ENCODE measurements at regions of chr6 and their contacts with region 1.

Region 1: DNA sequence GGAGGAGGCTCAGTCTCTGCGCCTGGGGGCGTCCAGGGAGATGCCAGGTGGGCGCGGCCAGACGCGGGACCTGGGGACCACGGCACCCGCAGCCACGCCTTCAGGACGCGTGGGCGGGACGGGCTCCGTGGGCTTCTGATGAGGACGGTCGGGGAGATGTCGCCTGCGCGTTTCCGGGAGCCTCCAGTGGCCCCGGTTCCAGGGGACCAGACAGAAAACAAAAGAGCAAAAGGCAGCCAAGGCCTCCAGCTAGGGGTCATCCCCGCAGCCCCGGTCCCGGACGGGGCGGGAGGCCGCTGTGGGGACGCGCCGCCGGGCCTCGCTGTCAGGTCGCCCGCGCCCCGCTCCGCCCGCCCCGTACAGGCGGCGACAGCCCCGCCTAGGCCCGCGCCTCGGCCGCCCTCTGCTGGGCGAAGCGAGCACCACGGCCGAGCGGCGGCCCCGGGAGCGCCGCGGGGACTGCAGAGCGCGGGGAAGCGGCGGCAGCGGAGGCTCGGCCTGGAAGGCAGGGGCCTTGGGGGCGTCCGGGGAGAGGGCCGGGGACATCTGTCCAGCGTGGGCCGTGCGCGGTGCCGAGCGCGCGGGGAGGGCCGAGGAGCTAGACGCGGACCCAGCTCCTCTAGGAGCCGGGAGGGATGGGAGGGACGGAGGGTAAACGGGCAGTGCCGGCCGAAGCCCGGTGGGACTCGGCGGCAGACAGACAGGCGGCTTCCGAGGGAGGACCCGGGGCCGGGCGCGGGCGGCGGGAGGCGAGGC is 48.7 kb downstream of the TMEM242 start:
- DNase-seq: peak; percentile 78
- H3K4me3 Mint-ChIP-seq: peak overlapping the region; percentile 86
- H3K27ac Mint-ChIP-seq: peak overlapping the region; percentile 67
- H3K4me1 Mint-ChIP-seq: peaks cover 4% of the 10 kb centered on the region
- H3K27me3 Mint-ChIP-seq: peaks cover 10% of the 10 kb centered on the region

Region 2: DNA sequence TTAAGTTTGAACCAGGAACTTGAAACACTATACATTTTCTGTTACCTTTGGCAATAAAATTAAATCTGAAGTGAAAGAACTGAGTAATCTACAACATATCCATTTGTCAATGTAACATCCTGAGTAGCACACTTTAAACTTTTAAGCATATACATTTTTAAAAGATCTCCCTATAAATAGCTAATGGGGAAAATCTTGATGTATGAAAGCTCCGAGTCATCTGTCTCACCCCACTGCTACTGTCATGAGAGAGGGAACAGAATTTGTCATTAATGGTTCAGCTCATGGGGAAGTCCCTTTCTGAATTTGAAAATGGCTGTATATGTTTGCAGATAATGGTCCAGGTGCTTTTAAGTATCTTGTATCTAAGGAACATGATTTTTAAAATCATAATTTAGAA is 1763.8 kb before region 1 on chr6:
- intact Hi-C with region 1: no loop called
- DNase-seq: no peak
- H3K4me3 Mint-ChIP-seq: no peak overlapping the region
- H3K27ac Mint-ChIP-seq: no peak overlapping the region
- H3K4me1 Mint-ChIP-seq: no peaks in the 10 kb centered on the region
- H3K27me3 Mint-ChIP-seq: peaks cover 3% of the 10 kb centered on the region

Region 3: GRCh38 chr6:156564127-156564806 is 710.4 kb before region 1 on chr6:
- intact Hi-C with region 1: loop called (anchors 1 kb)
- DNase-seq: peak; percentile 65
- H3K4me3 Mint-ChIP-seq: no peak overlapping the region
- H3K27ac Mint-ChIP-seq: no peak overlapping the region
- H3K4me1 Mint-ChIP-seq: peaks cover 7% of the 10 kb centered on the region
- H3K27me3 Mint-ChIP-seq: peaks cover 3% of the 10 kb centered on the region

Region 4: GRCh38 chr6:157034436-157035230 is 240.0 kb before region 1 on chr6:
- intact Hi-C with region 1: loop called (anchors 1 kb)
- DNase-seq: no peak
- H3K4me3 Mint-ChIP-seq: peak overlapping the region; percentile 65
- H3K27ac Mint-ChIP-seq: peak overlapping the region; percentile 40
- H3K4me1 Mint-ChIP-seq: peaks cover 25% of the 10 kb centered on the region
- H3K27me3 Mint-ChIP-seq: no peaks in the 10 kb centered on the region

Region 5: DNA sequence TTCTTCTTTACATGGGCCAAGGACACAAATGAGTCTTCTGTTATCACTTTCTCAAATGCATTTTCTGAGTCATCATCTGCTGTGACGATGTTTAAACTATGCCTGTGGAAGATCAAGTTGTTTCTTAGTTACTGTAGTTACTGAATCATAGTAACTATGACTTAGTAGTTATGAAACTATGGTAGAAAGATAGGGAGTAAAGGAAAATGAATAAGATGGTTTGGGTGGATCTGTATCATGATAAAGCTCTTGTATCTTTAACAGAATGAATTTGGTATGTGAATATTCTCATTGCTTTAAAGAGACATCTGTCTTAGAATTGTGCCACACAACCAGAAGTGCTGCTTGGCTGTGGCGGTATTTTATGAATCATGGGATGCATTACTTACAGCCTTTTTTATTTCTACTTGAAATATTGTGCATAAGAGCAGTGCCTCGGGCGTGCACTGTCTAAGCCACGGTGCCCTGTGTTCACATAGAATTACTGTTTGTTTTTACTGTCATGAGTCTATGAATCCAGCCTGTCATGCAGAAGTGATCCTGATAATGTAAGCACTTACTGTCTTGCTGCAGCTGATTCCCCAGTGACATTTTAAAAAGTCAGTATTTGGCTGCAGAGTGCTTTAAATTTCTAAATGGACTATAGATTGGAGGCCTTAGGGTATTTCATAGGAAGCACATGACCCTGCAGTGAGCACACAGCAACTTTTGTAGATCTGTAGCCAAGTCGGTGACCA is 166.6 kb before region 1 on chr6:
- intact Hi-C with region 1: loop called (anchors 5 kb)
- DNase-seq: no peak
- H3K4me3 Mint-ChIP-seq: no peak overlapping the region
- H3K27ac Mint-ChIP-seq: peak overlapping the region; percentile 73
- H3K4me1 Mint-ChIP-seq: peaks cover 55% of the 10 kb centered on the region
- H3K27me3 Mint-ChIP-seq: no peaks in the 10 kb centered on the region

Region 6: GRCh38 chr6:157221007-157221816 is 53.4 kb before region 1 on chr6:
- intact Hi-C with region 1: loop called (anchors 1 kb)
- DNase-seq: peak; percentile 80
- H3K4me3 Mint-ChIP-seq: peak overlapping the region; percentile 79
- H3K27ac Mint-ChIP-seq: peak overlapping the region; percentile 82
- H3K4me1 Mint-ChIP-seq: peaks cover 33% of the 10 kb centered on the region
- H3K27me3 Mint-ChIP-seq: peaks cover 4% of the 10 kb centered on the region

Region 7: DNA sequence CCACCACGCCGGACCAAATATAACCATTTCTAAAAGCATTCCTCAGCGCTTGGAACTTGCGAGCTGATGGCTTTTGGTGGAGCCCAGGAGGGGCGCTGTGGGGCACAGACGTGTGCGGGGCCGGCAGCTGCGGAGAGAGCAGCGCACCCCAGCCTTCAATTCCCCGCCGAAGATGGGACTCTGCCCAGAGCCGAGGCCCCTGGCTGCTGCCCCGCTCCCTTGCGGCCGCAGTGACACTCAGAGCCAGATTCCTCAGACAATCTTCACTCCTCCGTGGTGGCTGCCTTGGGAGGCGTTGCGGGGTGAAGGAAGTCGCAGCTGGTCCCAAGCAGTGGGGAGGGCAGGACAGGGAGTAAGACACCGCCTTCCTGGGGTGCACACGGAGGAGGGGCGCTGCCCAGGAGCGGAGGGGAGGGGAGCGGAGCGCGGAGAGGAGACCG is 39.0 kb before region 1 on chr6:
- intact Hi-C with region 1: loop called (anchors 1 kb)
- DNase-seq: peak; percentile 33
- H3K4me3 Mint-ChIP-seq: peak overlapping the region; percentile 87
- H3K27ac Mint-ChIP-seq: no peak overlapping the region
- H3K4me1 Mint-ChIP-seq: peaks cover 15% of the 10 kb centered on the region
- H3K27me3 Mint-ChIP-seq: peaks cover 44% of the 10 kb centered on the region

Region 8: DNA sequence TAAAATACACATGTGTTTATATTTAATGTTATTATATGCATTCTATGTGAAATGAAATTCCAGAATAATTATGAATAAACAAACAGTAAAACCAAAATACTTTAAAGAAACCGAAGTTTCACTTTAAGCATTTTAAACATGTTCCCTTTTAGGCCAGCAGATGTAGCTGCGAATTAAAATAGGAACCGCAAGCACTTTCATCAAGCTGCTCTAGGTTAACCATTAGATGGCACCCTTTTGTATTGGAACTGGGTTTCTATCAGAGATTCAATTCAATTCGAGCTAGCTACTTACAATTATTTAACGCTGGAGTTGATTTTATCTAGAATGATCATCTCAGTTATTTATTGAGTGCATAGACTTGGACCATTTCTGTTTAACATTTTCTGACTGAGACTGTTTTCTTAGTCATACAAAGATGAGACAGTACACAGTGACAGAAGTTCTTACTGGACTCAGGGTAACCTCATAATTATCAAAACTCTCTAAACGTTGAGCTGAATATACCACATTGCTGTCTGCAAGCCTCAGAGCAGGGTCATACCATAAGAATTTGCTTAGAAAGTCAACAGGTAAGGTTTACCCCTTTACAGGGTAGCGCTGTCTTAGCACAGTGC is 40.2 kb after region 1 on chr6:
- intact Hi-C with region 1: no loop called
- DNase-seq: peak; percentile 32
- H3K4me3 Mint-ChIP-seq: no peak overlapping the region
- H3K27ac Mint-ChIP-seq: no peak overlapping the region
- H3K4me1 Mint-ChIP-seq: peaks cover 16% of the 10 kb centered on the region
- H3K27me3 Mint-ChIP-seq: no peaks in the 10 kb centered on the region

Region 9: DNA sequence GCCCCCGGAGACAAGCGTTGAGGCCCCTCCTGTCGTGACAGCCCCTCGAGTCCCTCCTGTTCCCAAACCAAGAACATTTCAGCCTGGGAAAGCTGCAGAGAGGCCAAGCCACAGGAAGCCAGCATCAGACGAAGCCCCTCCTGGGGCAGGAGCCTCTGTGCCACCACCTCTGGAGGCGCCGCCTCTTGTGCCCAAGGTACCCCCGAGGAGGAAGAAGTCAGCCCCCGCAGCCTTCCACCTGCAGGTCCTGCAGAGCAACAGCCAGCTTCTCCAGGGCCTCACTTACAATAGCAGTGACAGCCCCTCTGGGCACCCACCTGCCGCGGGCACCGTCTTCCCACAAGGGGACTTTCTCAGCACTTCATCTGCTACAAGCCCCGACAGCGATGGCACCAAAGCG is 821.0 kb after region 1 on chr6:
- intact Hi-C with region 1: no loop called
- DNase-seq: no peak
- H3K4me3 Mint-ChIP-seq: no peak overlapping the region
- H3K27ac Mint-ChIP-seq: no peak overlapping the region
- H3K4me1 Mint-ChIP-seq: no peaks in the 10 kb centered on the region
- H3K27me3 Mint-ChIP-seq: no peaks in the 10 kb centered on the region